ENCODE measurements at regions of chr19 and their contacts with region 1.

Region 1: GRCh38 chr19:48646001-48646721 is at the start of gene CA11:
- DNase-seq: peak; percentile 87 to 94 (median 90)
- H3K4me3 ChIP-seq: peak within 1 kb of the TSS; percentile 90
- H3K4me3 Mint-ChIP-seq: peak within 1 kb of the TSS; percentile 85 to 95 (median 87)
- H3K27ac ChIP-seq: peak within 1 kb of the TSS; percentile 52
- H3K27ac Mint-ChIP-seq: peak within 1 kb of the TSS; percentile 85 to 97 (median 93)
- H3K4me1 ChIP-seq: peaks cover 40% of the 10 kb centered on the region
- H3K4me1 Mint-ChIP-seq: peaks cover 36 to 57% (median 42%) of the 10 kb centered on the region in 3 donors
- H3K27me3 ChIP-seq: no peaks in the 10 kb centered on the region
- H3K27me3 Mint-ChIP-seq: no peaks in the 10 kb centered on the region
- total RNA-seq, gene CA11: 12.7 to 13.0 TPM

Region 2: GRCh38 chr19:48656840-48657474 is 10.8 kb after region 1 on chr19:
- CTCF ChIA-PET with region 1: interaction called, 13 read pairs
- POLR2A ChIA-PET with region 1: interaction called, 3 read pairs
- DNase-seq: no peak
- H3K4me3 ChIP-seq: no peak overlapping the region
- H3K4me3 Mint-ChIP-seq: no peak overlapping the region
- H3K27ac ChIP-seq: no peak overlapping the region
- H3K27ac Mint-ChIP-seq: no peak overlapping the region
- H3K4me1 ChIP-seq: peaks cover 10% of the 10 kb centered on the region
- H3K4me1 Mint-ChIP-seq: peaks cover 7 to 9% (median 9%) of the 10 kb centered on the region in 3 donors
- H3K27me3 ChIP-seq: no peaks in the 10 kb centered on the region
- H3K27me3 Mint-ChIP-seq: peaks cover 4 to 8% of the 10 kb centered on the region in 2 donors

Region 3: DNA sequence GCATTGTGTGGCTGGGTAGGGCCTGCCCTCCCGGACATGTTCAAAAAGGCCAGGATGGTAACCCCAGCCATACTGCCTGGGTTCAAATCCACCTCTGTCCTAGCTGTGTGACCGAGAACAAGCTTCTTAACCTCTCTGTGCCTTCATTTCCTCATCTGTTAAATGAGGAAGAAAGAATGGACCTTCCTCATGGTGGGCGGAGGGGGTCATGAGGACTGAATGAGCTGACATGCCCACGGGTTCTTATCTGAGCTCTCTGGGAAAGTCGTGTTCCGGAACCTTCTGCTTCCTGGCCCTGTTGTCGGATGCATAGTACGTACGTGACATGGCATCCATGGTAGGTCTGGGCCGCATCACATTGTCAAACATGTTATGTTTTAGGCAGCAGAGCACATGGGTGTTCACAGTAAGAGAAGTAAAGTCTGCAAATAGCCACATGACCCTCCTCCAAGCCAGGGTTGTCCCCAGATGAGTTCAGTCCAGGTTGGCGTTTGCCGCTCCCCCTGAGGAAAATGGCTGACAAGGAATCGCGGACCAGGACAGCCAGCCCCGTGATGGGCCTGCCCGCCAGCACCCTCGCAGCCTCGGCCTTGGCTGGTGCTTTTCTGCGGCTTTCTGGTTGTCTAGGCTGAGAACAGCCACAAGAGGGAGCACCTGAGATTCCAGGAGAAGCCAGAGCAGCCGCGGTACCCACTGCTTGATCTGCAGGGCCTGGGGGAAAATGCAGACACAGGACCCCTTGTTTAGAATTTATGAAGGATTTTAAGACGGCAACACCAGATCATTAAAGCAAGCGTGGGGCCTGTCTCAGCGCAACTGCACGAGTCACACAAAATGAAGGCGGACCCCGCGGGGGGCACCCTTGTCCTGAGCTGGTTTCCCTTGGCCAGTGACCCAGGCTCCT is 29.0 kb after region 1 on chr19:
- CTCF ChIA-PET with region 1: interaction called, 34 read pairs
- POLR2A ChIA-PET with region 1: interaction called, 4 read pairs
- DNase-seq: peak; percentile 43 to 78 (median 65)
- H3K4me3 ChIP-seq: no peak overlapping the region
- H3K4me3 Mint-ChIP-seq: no peak overlapping the region
- H3K27ac ChIP-seq: no peak overlapping the region
- H3K27ac Mint-ChIP-seq: peak overlapping the region in 4 of 8 donors; percentile 5 to 82 (median 50)
- H3K4me1 ChIP-seq: peaks cover 9% of the 10 kb centered on the region
- H3K4me1 Mint-ChIP-seq: peaks cover 5 to 8% (median 7%) of the 10 kb centered on the region in 3 donors
- H3K27me3 ChIP-seq: no peaks in the 10 kb centered on the region
- H3K27me3 Mint-ChIP-seq: peaks cover 0 to 1% of the 10 kb centered on the region in 2 donors

Measured in CD8-positive, alpha-beta memory T cell (primary cell).